Ascending aorta (tissue), 2 donors: ENCODE measurements at regions of chr1 and their contacts with region 1.

Region 1: DNA sequence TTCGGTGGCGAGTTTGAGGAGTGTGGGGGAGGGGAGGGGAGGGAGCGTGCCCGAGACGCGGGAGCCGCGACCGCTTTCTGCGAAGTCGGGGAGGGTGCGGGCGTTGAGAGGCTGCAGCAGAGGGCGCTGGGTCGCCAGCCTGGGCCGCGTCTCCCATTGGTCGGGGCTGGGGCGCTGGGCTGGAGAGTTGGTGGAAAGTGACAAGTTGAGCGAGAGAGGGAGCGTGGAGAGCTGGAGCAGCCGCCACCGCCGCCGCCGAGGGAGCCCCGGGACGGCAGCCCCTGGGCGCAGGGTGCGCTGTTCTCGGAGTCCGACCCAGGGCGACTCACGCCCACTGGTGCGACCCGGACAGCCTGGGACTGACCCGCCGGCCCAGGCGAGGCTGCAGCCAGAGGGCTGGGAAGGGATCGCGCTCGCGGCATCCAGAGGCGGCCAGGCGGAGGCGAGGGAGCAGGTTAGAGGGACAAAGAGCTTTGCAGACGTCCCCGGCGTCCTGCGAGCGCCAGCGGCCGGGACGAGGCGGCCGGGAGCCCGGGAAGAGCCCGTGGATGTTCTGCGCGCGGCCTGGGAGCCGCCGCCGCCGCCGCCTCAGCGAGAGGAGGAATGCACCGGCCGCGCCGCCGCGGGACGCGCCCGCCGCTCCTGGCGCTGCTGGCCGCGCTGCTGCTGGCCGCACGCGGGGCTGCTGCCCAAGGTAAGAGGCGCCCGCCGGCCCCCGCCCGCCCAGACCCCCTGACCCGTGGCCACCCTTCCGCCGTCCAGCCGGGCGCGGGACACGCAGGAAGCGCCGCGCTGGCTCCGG is at the start of gene ROR1:
- DNase-seq: peak; percentile 52 to 95
- H3K4me3 ChIP-seq: peak within 1 kb of the TSS; percentile 77 to 92
- H3K27ac ChIP-seq: peak within 1 kb of the TSS; percentile 96 to 99
- H3K4me1 ChIP-seq: peaks cover 0 to 11% of the 10 kb centered on the region in 2 donors
- H3K27me3 ChIP-seq: no peaks in the 10 kb centered on the region
- CTCF ChIP-seq: peak; percentile 80 to 87 (median 84)
- total RNA-seq, gene ROR1: 115 TPM

Region 2: GRCh38 chr1:63230722-63231121 is 543.3 kb before region 1 on chr1:
- intact Hi-C with region 1: no loop called
- DNase-seq: no peak
- H3K4me3 ChIP-seq: no peak overlapping the region
- H3K27ac ChIP-seq: no peak overlapping the region
- H3K4me1 ChIP-seq: no peaks in the 10 kb centered on the region
- H3K27me3 ChIP-seq: no peaks in the 10 kb centered on the region
- CTCF ChIP-seq: no peak

Region 3: DNA sequence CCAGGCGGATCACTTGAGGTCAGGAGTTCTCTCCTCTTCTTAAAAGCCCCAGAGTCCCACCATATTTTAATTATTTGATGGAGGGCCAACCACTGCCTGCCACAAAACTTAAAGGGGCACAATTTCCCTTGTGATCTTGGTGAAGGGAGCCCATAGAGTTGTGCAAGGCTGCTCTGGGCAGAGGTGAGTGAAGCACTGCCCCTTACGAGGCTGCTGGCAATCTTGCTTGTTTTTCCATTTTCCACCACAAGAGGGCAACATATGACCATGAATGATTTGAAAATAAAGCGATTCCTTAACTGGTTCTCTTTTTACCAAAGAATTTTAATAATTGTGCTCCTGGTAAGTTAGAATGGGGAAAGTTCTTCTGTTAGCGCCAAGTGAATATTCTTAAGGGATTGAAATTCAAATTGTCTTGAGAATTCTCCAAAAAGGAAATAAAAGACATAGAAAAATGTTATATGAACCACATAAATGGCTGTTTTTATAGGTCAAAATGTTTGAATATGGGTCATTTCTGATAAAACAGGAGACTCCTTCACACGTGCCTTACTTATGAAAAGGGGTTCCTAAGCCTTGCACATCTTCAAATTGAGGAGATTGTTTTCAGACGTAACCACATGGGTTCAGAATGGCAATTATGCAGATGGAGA is 158.1 kb before region 1 on chr1:
- intact Hi-C with region 1: loop called (anchors 5 kb)
- DNase-seq: peak in 1 of 2 donors; percentile 87
- H3K4me3 ChIP-seq: no peak overlapping the region
- H3K27ac ChIP-seq: no peak overlapping the region
- H3K4me1 ChIP-seq: peaks cover 0 to 13% of the 10 kb centered on the region in 2 donors
- H3K27me3 ChIP-seq: no peaks in the 10 kb centered on the region
- CTCF ChIP-seq: peak; percentile 67 to 85 (median 77)

Region 4: DNA sequence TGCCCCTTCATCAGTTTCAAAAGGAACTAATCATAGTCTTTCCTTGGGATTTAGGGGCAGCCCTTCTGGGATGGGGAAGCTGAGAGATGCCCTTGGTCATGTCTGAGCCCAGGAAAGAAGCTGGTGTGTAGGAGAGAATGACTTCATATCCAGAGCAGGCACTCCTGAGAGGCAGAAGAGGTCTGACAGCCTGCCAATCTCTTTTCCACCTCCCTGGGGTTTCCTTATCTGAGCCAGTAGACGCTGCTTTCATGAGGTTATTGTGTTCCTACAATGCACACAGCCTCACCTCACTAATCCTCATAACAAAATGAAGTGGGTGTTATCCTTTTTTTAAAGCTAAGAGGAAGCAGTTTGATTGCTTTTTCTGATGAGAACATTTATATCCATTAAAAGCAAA is 13.9 kb after region 1 on chr1:
- intact Hi-C with region 1: no loop called
- DNase-seq: no peak
- H3K4me3 ChIP-seq: no peak overlapping the region
- H3K27ac ChIP-seq: no peak overlapping the region
- H3K4me1 ChIP-seq: peaks cover 3 to 32% of the 10 kb centered on the region in 2 donors
- H3K27me3 ChIP-seq: no peaks in the 10 kb centered on the region
- CTCF ChIP-seq: no peak

Region 5: DNA sequence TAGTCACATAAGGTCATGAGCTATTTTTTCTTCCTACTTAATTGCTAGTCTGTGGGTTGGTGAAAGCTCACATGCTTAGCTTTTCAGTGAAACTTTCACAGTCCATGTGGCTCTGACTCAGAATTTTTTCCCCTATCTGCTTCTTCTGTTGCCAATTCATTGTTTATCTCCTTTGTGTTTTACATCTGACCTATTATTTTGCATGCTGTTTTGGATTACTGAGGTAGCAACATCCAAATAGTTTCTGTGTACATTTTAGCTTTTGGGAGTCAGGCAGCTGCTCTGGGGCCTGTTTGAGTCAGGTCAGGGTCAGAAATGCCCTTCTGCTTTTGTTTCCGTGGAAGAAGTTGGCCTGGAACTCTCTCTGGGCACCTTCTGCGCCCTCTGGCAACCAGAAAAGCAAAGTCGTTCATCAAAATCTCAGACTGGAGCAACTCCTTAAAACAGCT is 39.8 kb after region 1 on chr1:
- intact Hi-C with region 1: loop called (anchors 2 kb)
- DNase-seq: peak in 1 of 2 donors; percentile 70
- H3K4me3 ChIP-seq: no peak overlapping the region
- H3K27ac ChIP-seq: peak overlapping the region; percentile 71 to 75
- H3K4me1 ChIP-seq: peaks cover 7 to 82% of the 10 kb centered on the region in 2 donors
- H3K27me3 ChIP-seq: no peaks in the 10 kb centered on the region
- CTCF ChIP-seq: no peak

Region 6: DNA sequence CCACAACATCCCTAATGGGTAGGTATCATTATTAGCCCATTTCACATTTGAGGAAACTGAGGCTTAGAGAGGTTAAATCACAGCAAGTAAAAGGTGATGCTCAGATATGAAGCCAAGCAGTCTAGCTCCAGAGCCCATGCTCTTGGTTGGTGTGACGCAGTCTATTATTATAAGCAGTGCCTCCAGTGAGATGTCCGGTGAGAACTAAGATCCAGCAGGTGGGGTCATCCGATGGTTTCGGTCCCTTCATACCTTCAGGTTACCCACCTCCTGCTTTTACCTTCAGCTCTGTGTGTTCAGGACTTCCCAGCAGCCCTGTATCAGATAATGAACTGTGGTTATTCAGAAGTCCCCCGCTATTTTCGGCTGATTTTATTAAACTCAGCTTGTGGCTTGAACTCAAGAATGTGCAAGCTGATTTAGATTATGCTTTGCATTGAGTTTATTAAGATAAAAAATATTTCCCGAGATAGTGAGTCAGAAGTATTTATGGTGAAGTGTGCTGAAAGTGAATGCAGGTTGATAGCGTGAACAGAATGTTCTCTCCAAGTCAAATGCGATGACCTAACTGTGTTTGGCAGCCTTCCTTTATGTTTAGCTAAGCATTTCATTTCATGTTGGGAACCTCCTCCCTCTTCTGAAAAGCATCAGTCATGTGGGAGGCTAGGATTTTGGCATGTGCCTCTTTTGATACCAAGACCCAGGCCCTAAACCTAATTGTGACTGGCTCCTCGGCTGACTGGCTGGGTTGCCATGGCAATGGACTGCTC is 268.5 kb after region 1 on chr1:
- intact Hi-C with region 1: loop called (anchors 2 kb)
- DNase-seq: peak; percentile 16 to 89
- H3K4me3 ChIP-seq: no peak overlapping the region
- H3K27ac ChIP-seq: peak overlapping the region; percentile 80 to 85
- H3K4me1 ChIP-seq: peaks cover 5 to 57% of the 10 kb centered on the region in 2 donors
- H3K27me3 ChIP-seq: no peaks in the 10 kb centered on the region
- CTCF ChIP-seq: no peak

Region 7: DNA sequence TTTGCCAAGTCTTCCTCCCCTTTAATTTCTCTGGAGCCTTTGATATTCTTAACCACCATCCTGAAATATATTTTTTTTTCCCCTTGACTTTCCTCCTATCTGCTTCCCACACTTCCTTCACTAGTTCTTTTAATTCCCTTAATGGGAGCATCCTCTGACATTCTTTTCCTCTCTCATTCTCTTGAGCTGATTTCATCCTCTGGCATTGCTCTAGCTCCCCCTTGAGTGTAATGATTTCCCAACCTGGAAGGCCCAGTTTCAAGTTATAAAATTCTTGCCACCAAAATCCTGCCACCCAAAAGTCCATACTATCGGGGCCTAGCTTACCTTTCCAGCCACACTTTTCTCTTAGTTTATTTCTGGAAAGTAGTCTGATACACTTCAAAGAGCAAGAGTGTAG is 390.0 kb after region 1 on chr1:
- intact Hi-C with region 1: loop called (anchors 2 kb)
- DNase-seq: no peak
- H3K4me3 ChIP-seq: no peak overlapping the region
- H3K27ac ChIP-seq: peak overlapping the region; percentile 61 to 70
- H3K4me1 ChIP-seq: peaks cover 12 to 34% of the 10 kb centered on the region in 2 donors
- H3K27me3 ChIP-seq: no peaks in the 10 kb centered on the region
- CTCF ChIP-seq: peak in 2 of 3 experiments; percentile 37 to 58